Esophagus muscularis mucosa (tissue), 4 donors: ENCODE measurements at regions of chr5 and their contacts with region 1.

Region 1: DNA sequence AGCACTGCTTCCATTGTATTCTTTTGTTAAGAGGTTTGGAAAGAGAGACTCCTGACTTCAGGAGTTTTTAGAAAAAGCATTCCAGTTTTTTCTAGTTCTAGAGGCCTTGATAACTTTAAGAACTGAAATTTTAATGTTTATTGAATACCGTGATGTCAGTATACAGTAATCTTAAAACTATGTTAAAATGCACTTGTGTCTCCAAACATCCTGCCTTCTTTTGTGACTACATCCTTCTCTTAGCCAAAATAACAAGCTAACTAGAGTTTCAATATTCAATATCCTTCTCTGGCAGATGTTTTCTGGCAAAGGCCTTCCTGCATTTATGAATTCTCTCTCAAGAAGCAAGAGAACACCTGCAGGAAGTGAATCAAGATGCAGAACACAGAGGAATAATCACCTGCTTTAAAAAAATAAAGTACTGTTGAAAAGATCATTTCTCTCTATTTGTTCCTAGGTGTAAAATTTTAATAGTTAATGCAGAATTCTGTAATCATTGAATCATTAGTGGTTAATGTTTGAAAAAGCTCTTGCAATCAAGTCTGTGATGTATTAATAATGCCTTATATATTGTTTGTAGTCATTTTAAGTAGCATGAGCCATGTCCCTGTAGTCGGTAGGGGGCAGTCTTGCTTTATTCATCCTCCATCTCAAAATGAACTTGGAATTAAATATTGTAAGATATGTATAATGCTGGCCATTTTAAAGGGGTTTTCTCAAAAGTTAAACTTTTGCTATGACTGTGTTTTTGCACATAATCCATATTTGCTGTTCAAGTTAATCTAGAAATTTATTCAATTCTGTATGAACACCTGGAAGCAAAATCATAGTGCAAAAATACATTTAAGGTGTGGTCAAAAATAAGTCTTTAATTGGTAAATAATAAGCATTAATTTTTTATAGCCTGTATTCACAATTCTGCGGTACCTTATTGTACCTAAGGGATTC is 43.1 kb downstream of the NDFIP1 start:
- DNase-seq: no peak
- H3K4me3 ChIP-seq: no peak overlapping the region
- H3K27ac ChIP-seq: no peak overlapping the region
- H3K4me1 ChIP-seq: peaks cover 0 to 7% (median 3%) of the 10 kb centered on the region in 4 donors
- H3K27me3 ChIP-seq: no peaks in the 10 kb centered on the region
- CTCF ChIP-seq: peak; percentile 86 to 92 (median 89)
- EP300 ChIP-seq: no peak
- POLR2A ChIP-seq: no peak

Region 2: DNA sequence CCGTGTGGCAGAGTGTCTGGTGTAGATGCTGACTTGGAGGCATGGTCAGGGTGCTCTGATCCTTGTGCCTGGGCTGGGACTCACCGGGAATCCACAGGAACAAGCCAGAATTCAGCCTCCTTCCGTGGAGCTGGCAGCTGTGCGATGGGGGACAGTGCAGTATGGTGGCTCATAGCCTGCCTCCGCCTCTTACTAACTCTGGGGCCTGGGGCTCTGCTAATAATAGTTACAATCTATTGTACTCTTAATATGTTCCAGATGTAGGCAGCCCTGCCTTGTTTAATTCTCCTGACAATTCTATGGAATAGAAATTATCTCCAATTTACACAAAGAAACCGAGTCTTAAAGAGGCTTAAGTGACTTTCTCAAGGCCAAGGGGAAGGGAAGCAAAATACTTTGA is 351.1 kb before region 1 on chr5:
- intact Hi-C with region 1: no loop called
- DNase-seq: no peak
- H3K4me3 ChIP-seq: no peak overlapping the region
- H3K27ac ChIP-seq: no peak overlapping the region
- H3K4me1 ChIP-seq: peaks cover 18 to 23% (median 19%) of the 10 kb centered on the region in 4 donors
- H3K27me3 ChIP-seq: peaks cover 0 to 36% (median 0%) of the 10 kb centered on the region in 4 donors
- CTCF ChIP-seq: no peak
- EP300 ChIP-seq: no peak
- POLR2A ChIP-seq: no peak

Region 3: GRCh38 chr5:142685418-142686209 is 533.9 kb after region 1 on chr5 and contains the start of gene FGF1:
- intact Hi-C with region 1: loop called (anchors 10 kb)
- DNase-seq: no peak
- H3K4me3 ChIP-seq: peak within 1 kb of the TSS in 2 of 4 donors; percentile 1 to 8
- H3K27ac ChIP-seq: peak within 1 kb of the TSS; percentile 64 to 76 (median 70)
- H3K4me1 ChIP-seq: peaks cover 30 to 47% (median 33%) of the 10 kb centered on the region in 4 donors
- H3K27me3 ChIP-seq: no peaks in the 10 kb centered on the region
- CTCF ChIP-seq: no peak
- EP300 ChIP-seq: no peak
- POLR2A ChIP-seq: no peak
- total RNA-seq, gene FGF1: 1.7 to 4.0 (median 2.9) TPM